H1 (cell line): ENCODE measurements at regions of chr7 and their contacts with region 1.

Region 1: DNA sequence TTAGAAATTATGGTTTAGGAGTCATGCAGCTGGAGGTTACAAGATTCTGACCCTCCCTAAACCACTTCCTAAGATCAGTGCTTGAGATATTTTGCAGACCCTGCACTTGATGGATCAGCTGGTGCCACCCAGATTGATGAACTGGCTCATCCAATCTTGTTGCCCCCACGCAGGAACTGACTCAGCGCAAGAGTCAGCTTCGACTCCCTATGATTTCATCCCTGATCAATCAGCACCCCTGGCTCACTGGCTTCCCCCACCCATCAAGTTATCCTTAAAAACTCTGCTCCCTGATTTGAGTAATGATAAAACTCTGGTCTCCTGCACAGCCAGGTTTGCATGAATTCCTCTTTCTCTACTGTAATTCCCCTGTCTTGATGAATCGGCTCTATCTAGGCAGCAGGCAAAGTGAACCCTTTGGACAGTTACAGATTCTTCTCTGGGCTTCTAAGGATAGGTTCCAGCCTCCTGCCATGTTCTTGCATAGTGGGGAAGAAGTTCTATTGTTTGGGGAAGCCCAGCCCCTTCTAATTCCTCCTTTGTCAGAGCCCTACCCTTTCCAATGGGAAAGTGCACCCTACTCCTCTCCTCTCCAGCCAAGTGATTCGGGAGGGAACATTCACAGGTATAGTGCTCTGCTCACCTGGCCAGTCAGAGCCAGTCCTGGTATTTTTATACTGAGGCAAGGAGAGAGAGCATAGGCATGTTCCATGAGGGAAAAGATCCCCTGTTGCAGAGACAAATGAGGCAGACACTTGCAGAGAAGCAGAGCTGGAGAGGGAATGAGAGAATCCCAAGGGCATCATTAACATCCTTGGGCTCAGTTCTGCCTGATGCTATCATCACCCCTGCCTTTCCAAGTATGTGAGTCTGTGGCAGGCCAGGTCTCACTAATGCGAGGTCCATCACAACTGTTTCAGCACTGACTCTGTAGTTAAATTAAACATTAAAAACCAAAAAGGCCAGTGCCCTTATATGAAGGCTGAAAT is 224.4 kb upstream of the GALNT17 start:
- DNase-seq: no peak
- H3K4me3 ChIP-seq: no peak overlapping the region
- H3K27ac ChIP-seq: no peak overlapping the region
- H3K4me1 ChIP-seq: peaks cover 0 to 3% (median 1%) of the 10 kb centered on the region in 4 experiments; a peak in 3 of 7 replicates
- H3K27me3 ChIP-seq: no peaks in the 10 kb centered on the region
- CTCF ChIP-seq: no peak
- EP300 ChIP-seq: no peak
- POLR2A ChIP-seq: no peak
- RAD21 ChIP-seq: no peak

Region 2: DNA sequence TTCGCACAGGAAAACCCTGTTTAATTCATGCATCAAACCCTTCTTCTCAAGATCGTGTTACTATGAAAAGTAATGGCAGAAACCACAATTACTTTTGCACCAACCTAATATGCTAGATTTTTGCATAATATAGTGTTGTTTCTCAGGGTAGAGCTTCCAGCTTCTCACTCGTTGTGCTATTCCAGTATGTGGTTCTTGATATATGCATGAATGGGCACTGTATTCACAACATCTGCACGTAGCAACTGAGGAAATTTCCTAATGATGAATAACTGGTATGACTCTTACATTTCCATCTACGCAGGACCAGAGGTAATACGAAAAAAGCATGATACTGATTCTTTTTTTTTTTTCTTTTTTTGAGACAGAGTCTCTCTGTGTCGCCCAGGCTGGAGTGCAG is 102.2 kb before region 1 on chr7:
- CTCF ChIA-PET with region 1: no interaction called
- POLR2A ChIA-PET with region 1: no interaction called
- DNase-seq: no peak
- H3K4me3 ChIP-seq: no peak overlapping the region
- H3K27ac ChIP-seq: no peak overlapping the region
- H3K4me1 ChIP-seq: no peaks in the 10 kb centered on the region
- H3K27me3 ChIP-seq: no peaks in the 10 kb centered on the region
- CTCF ChIP-seq: no peak
- EP300 ChIP-seq: no peak
- POLR2A ChIP-seq: no peak
- RAD21 ChIP-seq: no peak

Region 3: DNA sequence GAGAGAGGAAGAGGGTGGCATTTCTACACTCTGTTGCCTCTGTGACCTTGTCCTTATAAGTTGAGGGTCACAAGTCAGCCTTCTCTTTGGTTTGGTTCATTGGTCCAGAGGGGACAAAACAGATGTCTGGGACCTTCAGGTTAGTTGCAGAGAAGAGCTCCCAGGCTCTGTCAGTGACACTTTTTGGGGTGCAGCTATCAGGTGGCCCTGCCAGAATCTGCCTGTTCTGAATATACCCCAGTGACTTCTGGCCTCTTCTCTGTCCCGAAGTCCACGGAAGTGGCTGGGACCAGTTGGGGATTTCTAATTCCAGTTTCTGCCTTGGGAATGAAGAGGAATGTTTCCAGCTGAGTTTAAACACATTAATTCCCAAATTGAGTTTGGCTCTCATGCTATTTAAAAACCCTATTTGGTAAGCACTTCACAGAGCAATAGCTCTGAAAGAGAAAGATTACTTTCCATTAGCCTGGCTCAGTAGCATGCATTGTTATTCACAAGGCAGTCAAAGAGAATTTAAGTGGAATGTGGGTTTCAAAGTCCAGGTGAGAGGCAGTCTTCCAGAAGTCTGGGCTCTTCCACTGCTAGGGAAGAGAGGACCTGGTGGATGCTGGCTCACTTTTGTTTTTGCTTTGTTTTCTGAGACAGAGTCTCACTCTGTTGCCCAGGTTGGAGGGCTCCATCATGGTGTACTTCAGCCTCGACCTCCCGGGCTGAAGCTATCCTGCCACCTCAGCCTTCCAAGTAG is 13.4 kb before region 1 on chr7:
- CTCF ChIA-PET with region 1: interaction called, 3 read pairs
- POLR2A ChIA-PET with region 1: interaction called, 11 read pairs
- DNase-seq: peak in 1 of 2 experiments; percentile 46
- H3K4me3 ChIP-seq: peak overlapping the region in 1 of 4 experiments; percentile 13; a peak in 1 of 8 replicates
- H3K27ac ChIP-seq: peak overlapping the region; percentile 80
- H3K4me1 ChIP-seq: peaks cover 13 to 32% (median 23%) of the 10 kb centered on the region in 4 experiments; a peak in 6 of 7 replicates
- H3K27me3 ChIP-seq: no peaks in the 10 kb centered on the region
- CTCF ChIP-seq: no peak
- EP300 ChIP-seq: peak in 1 of 2 experiments; percentile 92; a peak in 2 of 3 replicates
- POLR2A ChIP-seq: no peak; a peak in 1 of 3 replicates
- RAD21 ChIP-seq: peak in 1 of 2 experiments; percentile 10; a peak in 1 of 4 replicates

Region 4: GRCh38 chr7:70953331-70953741 is 45.8 kb after region 1 on chr7:
- CTCF ChIA-PET with region 1: no interaction called
- POLR2A ChIA-PET with region 1: no interaction called
- DNase-seq: peak in 1 of 2 experiments; percentile 19
- H3K4me3 ChIP-seq: no peak overlapping the region
- H3K27ac ChIP-seq: no peak overlapping the region
- H3K4me1 ChIP-seq: peaks cover 0 to 6% (median 3%) of the 10 kb centered on the region in 4 experiments; a peak in 4 of 7 replicates
- H3K27me3 ChIP-seq: no peaks in the 10 kb centered on the region
- CTCF ChIP-seq: no peak
- EP300 ChIP-seq: no peak
- POLR2A ChIP-seq: no peak
- RAD21 ChIP-seq: no peak

Region 5: GRCh38 chr7:70975754-70976153 is 68.2 kb after region 1 on chr7:
- CTCF ChIA-PET with region 1: no interaction called
- POLR2A ChIA-PET with region 1: no interaction called
- DNase-seq: peak in 1 of 2 experiments; percentile 17
- H3K4me3 ChIP-seq: no peak overlapping the region
- H3K27ac ChIP-seq: no peak overlapping the region
- H3K4me1 ChIP-seq: no peaks in the 10 kb centered on the region
- H3K27me3 ChIP-seq: no peaks in the 10 kb centered on the region
- CTCF ChIP-seq: no peak
- EP300 ChIP-seq: no peak
- POLR2A ChIP-seq: no peak
- RAD21 ChIP-seq: no peak